ENCODE measurements at regions of chr4 and their contacts with region 1.

Region 1: GRCh38 chr4:55008166-55009070 is 117.0 kb downstream of the KDR start:
- DNase-seq: no peak
- H3K4me3 ChIP-seq: no peak overlapping the region
- H3K27ac ChIP-seq: no peak overlapping the region
- H3K4me1 ChIP-seq: peaks cover 10 to 47% (median 44%) of the 10 kb centered on the region in 4 donors
- H3K27me3 ChIP-seq: no peaks in the 10 kb centered on the region
- CTCF ChIP-seq: peak in 1 of 3 experiments; percentile 33
- EP300 ChIP-seq: no peak
- POLR2A ChIP-seq: no peak

Region 2: DNA sequence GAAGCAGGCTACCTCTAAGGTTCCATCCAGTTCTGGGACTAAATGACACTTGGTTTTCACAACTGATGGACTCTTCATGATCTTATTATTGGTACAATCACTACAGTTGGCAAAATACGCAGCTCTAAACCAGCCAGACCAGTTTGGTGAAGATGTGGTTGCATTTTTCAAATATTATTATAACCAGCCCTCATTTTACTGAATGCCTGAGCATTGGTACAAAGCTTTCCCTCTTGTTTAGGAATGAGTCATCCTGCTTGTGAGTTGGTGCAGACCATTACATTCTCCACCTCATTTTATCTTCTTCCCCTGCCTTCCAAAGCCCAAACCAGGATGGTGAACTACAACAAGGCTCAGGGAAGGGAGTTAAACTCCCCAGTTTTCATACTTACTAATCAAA is 106.1 kb before region 1 on chr4:
- intact Hi-C with region 1: no loop called
- DNase-seq: peak; percentile 53
- H3K4me3 ChIP-seq: no peak overlapping the region
- H3K27ac ChIP-seq: no peak overlapping the region
- H3K4me1 ChIP-seq: no peaks in the 10 kb centered on the region
- H3K27me3 ChIP-seq: no peaks in the 10 kb centered on the region
- CTCF ChIP-seq: no peak
- EP300 ChIP-seq: no peak
- POLR2A ChIP-seq: no peak

Region 3: DNA sequence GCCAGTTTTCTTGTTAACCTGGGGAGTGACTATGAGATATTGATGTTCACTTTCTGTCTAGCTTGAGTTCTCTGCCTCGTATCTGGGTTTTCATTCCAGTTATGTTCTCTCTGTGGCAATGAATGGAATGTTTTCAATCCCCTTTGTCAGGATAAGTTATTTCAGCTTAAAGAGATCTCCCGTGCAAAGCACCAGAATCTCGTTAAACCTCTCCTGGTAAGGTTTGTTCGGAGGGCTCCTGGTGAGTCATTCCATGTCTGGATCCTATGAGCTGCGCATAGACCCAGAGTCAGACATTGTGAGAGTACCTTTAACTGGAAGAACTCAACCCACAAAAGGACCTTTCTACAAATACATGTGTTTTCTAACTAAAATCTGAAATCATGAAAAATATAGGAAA is 66.0 kb after region 1 on chr4:
- intact Hi-C with region 1: loop called (anchors 5 kb)
- DNase-seq: no peak
- H3K4me3 ChIP-seq: no peak overlapping the region
- H3K27ac ChIP-seq: no peak overlapping the region
- H3K4me1 ChIP-seq: peaks cover 0 to 6% (median 4%) of the 10 kb centered on the region in 4 donors
- H3K27me3 ChIP-seq: no peaks in the 10 kb centered on the region
- CTCF ChIP-seq: no peak
- EP300 ChIP-seq: no peak
- POLR2A ChIP-seq: no peak

Region 4: DNA sequence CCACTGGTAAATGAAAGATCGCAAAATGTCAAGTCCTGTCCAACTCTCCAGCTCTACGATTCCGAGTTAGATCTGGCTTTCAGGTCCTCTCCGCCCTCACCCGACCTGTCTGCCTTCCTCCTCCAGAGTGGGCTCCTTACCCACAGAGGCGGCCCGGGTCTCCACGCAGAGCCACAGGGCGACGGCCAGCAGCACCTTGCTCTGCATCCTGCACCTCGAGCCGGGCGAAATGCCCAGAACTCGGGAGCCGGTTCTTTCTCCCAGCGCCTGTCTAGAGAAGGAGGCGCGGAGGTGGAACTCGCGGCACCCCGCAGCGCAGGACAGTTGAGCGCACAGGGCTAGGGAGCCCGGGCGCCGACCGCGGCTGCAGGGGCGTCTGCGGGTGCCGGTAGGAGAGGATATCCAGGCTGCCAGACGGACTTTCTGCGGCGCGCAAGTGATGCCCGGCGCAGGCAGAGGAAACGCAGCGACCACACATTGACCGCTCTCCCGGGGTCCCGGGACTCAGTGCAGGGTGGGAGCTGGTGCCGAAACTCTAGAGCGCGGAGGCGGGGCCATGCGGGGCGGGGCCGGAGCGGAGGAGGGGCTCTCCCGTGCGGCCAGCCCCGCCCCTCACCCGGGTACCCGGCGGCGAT is 116.8 kb after region 1 on chr4 and contains the start of gene KDR:
- intact Hi-C with region 1: loop called (anchors 10 kb)
- DNase-seq: no peak
- H3K4me3 ChIP-seq: peak within 1 kb of the TSS; percentile 63 to 73 (median 68)
- H3K27ac ChIP-seq: peak within 1 kb of the TSS; percentile 36 to 70 (median 62)
- H3K4me1 ChIP-seq: peaks cover 14 to 31% (median 27%) of the 10 kb centered on the region in 4 donors
- H3K27me3 ChIP-seq: peaks cover 0 to 17% (median 6%) of the 10 kb centered on the region in 4 donors
- CTCF ChIP-seq: no peak
- EP300 ChIP-seq: no peak
- POLR2A ChIP-seq: no peak
- total RNA-seq, gene KDR: 39.5 to 104 (median 61.7) TPM

Region 5: DNA sequence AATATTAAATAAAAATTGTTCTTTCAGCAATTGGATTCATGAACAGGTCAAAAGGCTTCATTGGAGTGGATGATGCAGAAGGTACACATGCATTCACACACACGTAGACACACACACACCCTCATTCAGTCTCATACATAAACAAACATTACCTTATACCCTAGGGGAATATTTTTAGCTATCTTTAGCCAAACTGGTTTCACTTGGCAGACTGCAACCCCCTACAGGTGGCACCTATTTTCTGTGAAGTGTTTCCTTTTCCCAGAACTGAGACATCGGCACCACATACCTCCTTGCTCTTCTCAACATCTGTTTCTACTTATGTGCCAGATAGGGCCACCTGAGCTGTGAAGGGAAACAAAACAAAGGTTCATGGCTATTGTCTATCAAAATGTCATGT is 135.4 kb after region 1 on chr4:
- intact Hi-C with region 1: no loop called
- DNase-seq: no peak
- H3K4me3 ChIP-seq: no peak overlapping the region
- H3K27ac ChIP-seq: no peak overlapping the region
- H3K4me1 ChIP-seq: no peaks in the 10 kb centered on the region
- H3K27me3 ChIP-seq: no peaks in the 10 kb centered on the region
- CTCF ChIP-seq: no peak
- EP300 ChIP-seq: no peak
- POLR2A ChIP-seq: no peak

Region 6: GRCh38 chr4:55184600-55185523 is 176.4 kb after region 1 on chr4:
- intact Hi-C with region 1: loop called (anchors 10 kb)
- DNase-seq: no peak
- H3K4me3 ChIP-seq: no peak overlapping the region
- H3K27ac ChIP-seq: peak overlapping the region in 3 of 4 donors; percentile 1 to 35 (median 22)
- H3K4me1 ChIP-seq: peaks cover 0 to 10% (median 8%) of the 10 kb centered on the region in 4 donors
- H3K27me3 ChIP-seq: no peaks in the 10 kb centered on the region
- CTCF ChIP-seq: peak in 1 of 3 experiments; percentile 16
- EP300 ChIP-seq: no peak
- POLR2A ChIP-seq: no peak

Measured in esophagus muscularis mucosa (tissue), 4 donors.